Activated T-helper 2 cell treated with anti-CD3 and anti-CD28 coated beads, Interferon-gamma antibody, Interleukin-2, Interleukin-4, amounts not matched to agents 10 μg/mL and 5 μg/mL and 100 μg/mL, durations not matched to agents 14 hours and 24 hours and 36 hours (primary cell): ENCODE measurements at regions of chr10 and their contacts with region 1.

Region 1: GRCh38 chr10:101709359-101710058 is 14.5 kb upstream of the FBXW4 start:
- DNase-seq: no peak
- H3K4me3 Mint-ChIP-seq: no peak overlapping the region
- H3K27ac Mint-ChIP-seq: no peak overlapping the region
- H3K4me1 Mint-ChIP-seq: peaks cover 17% of the 10 kb centered on the region
- H3K27me3 Mint-ChIP-seq: peaks cover 55% of the 10 kb centered on the region

Region 2: GRCh38 chr10:101602761-101603398 is 106.6 kb before region 1 on chr10:
- intact Hi-C with region 1: loop called (anchors 10 kb)
- DNase-seq: peak; percentile 62
- H3K4me3 Mint-ChIP-seq: no peak overlapping the region
- H3K27ac Mint-ChIP-seq: no peak overlapping the region
- H3K4me1 Mint-ChIP-seq: no peaks in the 10 kb centered on the region
- H3K27me3 Mint-ChIP-seq: no peaks in the 10 kb centered on the region

Region 3: GRCh38 chr10:101879456-101880231 is 170.1 kb after region 1 on chr10:
- intact Hi-C with region 1: no loop called
- DNase-seq: no peak
- H3K4me3 Mint-ChIP-seq: no peak overlapping the region
- H3K27ac Mint-ChIP-seq: no peak overlapping the region
- H3K4me1 Mint-ChIP-seq: peaks cover 11% of the 10 kb centered on the region
- H3K27me3 Mint-ChIP-seq: no peaks in the 10 kb centered on the region